ENCODE measurements at regions of chr3 and their contacts with region 1.

Region 1: DNA sequence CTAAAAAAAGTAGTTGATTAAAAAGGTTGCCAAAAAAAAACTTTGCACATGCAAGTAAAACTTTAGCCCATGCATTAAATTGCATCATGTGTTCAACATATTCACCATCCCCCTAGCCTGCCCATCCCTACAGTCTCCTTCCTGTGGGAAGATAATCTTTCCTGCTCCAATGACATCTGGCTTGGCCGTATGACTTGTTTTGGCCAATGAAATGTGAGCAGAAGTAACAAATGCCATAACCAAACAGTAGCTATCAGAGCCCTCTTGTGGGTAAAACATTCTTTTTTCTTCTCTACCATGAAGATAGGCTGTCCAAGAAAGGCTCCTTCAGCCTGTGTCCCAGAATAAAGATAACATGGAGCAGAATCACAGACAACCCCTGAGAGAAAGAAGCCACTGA is 15.3 kb downstream of the ERC2 start:
- DNase-seq: no peak
- ATAC-seq: no peak
- H3K4me3 ChIP-seq: no peak overlapping the region
- H3K27ac ChIP-seq: no peak overlapping the region
- H3K4me1 ChIP-seq: no peaks in the 10 kb centered on the region
- H3K27me3 ChIP-seq: no peaks in the 10 kb centered on the region
- CTCF ChIP-seq: no peak
- EP300 ChIP-seq: no peak
- POLR2A ChIP-seq: no peak
- RAD21 ChIP-seq: no peak

Region 2: GRCh38 chr3:56347219-56347871 is 105.7 kb before region 1 on chr3:
- CTCF ChIA-PET with region 1: no interaction called
- POLR2A ChIA-PET with region 1: no interaction called
- in situ Hi-C with region 1: no loop called
- intact Hi-C with region 1: loop called (anchors 5 kb)
- DNase-seq: peak; percentile 33 to 47 (median 38)
- ATAC-seq: peak; percentile 66
- H3K4me3 ChIP-seq: no peak overlapping the region
- H3K27ac ChIP-seq: no peak overlapping the region
- H3K4me1 ChIP-seq: no peaks in the 10 kb centered on the region
- H3K27me3 ChIP-seq: no peaks in the 10 kb centered on the region
- CTCF ChIP-seq: peak; percentile 51 to 62 (median 55)
- EP300 ChIP-seq: no peak
- POLR2A ChIP-seq: no peak
- RAD21 ChIP-seq: peak in 1 of 2 experiments; percentile 35; a peak in 1 of 4 replicates